AG04450 (cell line): ENCODE measurements at regions of chr20 and their contacts with region 1.

Region 1: GRCh38 chr20:33653218-33653899 is 8.8 kb upstream of the C20orf144 start:
- DNase-seq: no peak
- H3K4me3 ChIP-seq: no peak overlapping the region
- H3K27ac ChIP-seq: peak overlapping the region; percentile 25
- H3K27me3 ChIP-seq: no peaks in the 10 kb centered on the region
- CTCF ChIP-seq: peak; percentile 97

Region 2: DNA sequence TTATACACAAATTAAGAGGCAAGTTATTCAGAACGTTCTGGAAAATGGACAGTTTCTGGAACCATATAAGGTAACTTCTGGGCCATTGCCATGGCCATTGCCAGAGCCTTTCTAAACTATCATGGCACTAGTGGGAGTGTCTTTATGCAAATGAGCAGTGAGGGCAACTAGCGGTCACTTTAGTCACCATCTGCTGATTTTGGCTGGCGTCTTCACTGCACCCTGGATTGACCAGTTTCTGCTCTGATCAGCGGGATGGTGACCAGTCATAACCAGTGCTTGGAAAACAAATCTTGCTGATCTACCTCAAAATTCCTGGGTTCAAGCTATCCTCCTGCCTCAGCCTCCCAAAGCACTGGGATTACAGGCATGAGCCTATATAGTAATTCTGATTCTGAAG is 202.5 kb before region 1 on chr20:
- CTCF ChIA-PET with region 1: interaction called, 10 read pairs
- POLR2A ChIA-PET with region 1: no interaction called
- DNase-seq: no peak
- H3K4me3 ChIP-seq: no peak overlapping the region
- H3K27ac ChIP-seq: no peak overlapping the region
- H3K27me3 ChIP-seq: no peaks in the 10 kb centered on the region
- CTCF ChIP-seq: no peak

Region 3: DNA sequence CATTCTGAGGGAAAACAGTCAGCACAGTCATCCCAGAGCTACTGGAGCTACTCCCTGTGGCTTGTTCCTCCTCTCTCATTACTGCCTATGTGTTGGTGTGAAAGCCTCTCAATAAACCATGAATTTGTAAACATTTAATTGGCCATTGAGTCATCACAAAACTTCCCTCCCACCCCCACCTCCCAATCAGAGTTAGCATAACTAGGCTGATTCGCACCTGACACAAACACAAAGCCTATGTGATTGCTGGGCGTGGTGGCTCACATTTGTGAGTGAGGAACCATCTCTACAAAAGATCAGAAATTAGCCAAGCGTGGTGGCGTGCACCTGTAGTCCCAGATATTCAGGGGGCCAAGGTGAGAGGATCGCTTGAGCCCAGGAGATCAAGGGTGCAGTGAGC is 192.6 kb before region 1 on chr20:
- CTCF ChIA-PET with region 1: interaction called, 11 read pairs
- POLR2A ChIA-PET with region 1: no interaction called
- DNase-seq: no peak
- H3K4me3 ChIP-seq: no peak overlapping the region
- H3K27ac ChIP-seq: no peak overlapping the region
- H3K27me3 ChIP-seq: no peaks in the 10 kb centered on the region
- CTCF ChIP-seq: no peak

Region 4: DNA sequence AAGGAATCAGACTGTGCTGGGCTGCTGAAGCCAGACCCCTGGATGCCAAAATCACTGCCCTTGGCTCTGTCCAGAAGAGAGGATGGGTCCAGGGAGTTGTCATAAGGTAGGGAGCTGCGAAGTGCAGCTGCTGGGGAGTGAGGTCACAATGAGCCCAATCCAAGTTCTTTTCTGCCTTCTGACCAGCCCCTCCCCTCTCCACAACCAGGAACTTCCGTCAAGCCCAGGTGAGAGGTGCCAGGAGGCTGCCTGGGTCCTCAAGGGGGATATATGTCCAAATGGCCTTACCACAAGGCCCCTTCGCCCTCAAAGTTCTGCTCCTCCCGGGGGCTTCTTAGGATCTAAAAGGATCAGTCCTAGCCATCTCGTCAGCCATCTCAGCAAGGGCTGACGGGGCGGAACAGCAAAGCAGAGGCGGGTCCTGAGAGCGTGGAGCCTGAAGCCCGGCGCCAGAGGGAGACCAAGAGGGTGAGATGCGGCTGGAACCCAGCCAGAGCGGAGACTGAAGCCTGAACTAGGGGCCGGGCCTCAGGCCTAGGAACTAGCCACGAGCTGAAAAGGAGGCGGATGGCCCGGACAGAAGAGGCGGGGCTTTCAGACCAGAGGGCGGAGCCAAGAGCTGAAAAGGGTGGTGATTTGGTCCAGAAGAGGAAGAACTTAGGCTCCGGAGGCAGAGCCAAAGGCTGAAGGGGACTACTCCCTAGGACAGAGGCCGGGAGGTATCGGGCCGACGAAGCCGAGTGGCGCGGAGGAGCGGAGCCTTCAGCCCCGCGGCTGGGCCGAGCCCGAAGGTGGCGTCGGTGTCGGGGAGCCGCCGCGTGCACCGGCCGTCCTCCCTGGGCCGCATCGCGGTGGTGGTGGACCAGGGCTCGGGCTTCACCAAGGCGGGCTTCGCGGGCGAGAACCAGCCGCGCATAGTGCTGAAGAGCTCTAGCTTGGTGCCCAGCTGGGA is 13.2 kb after region 1 on chr20 and contains the start of gene ACTL10:
- CTCF ChIA-PET with region 1: interaction called, 13 read pairs
- POLR2A ChIA-PET with region 1: interaction called, 10 read pairs
- DNase-seq: peak; percentile 95
- H3K4me3 ChIP-seq: peak within 1 kb of the TSS; percentile 61
- H3K27ac ChIP-seq: peak within 1 kb of the TSS; percentile 62
- H3K27me3 ChIP-seq: no peaks in the 10 kb centered on the region
- CTCF ChIP-seq: peak; percentile 52
- polyA plus RNA-seq, gene ACTL10: 0.31 and 0.41 TPM in 2 replicates

Region 5: GRCh38 chr20:33731693-33732165 is 78.4 kb after region 1 on chr20 and contains the start of gene ZNF341:
- CTCF ChIA-PET with region 1: no interaction called
- POLR2A ChIA-PET with region 1: no interaction called
- DNase-seq: peak; percentile 37
- H3K4me3 ChIP-seq: peak within 1 kb of the TSS; percentile 68
- H3K27ac ChIP-seq: peak within 1 kb of the TSS; percentile 61
- H3K27me3 ChIP-seq: no peaks in the 10 kb centered on the region
- CTCF ChIP-seq: peak; percentile 73
- polyA plus RNA-seq, gene ZNF341: 1.5 and 1.6 TPM in 2 replicates